ENCODE measurements at regions of chr7 and their contacts with region 1.

Region 1: GRCh38 chr7:87506246-87507180 is 31.0 kb upstream of the ABCB4 start:
- DNase-seq: peak; percentile 16
- ATAC-seq: no peak; the same call in 1 of the 2 replicates
- H3K4me3 ChIP-seq: no peak overlapping the region
- H3K27ac ChIP-seq: no peak overlapping the region
- H3K4me1 ChIP-seq: 0 out of 2 replicates have a peak, but pooled peaks cover 8% of the 10 kb centered on the region
- H3K27me3 ChIP-seq: no peaks in the 10 kb centered on the region
- CTCF ChIP-seq: peak; percentile 60

Region 2: DNA sequence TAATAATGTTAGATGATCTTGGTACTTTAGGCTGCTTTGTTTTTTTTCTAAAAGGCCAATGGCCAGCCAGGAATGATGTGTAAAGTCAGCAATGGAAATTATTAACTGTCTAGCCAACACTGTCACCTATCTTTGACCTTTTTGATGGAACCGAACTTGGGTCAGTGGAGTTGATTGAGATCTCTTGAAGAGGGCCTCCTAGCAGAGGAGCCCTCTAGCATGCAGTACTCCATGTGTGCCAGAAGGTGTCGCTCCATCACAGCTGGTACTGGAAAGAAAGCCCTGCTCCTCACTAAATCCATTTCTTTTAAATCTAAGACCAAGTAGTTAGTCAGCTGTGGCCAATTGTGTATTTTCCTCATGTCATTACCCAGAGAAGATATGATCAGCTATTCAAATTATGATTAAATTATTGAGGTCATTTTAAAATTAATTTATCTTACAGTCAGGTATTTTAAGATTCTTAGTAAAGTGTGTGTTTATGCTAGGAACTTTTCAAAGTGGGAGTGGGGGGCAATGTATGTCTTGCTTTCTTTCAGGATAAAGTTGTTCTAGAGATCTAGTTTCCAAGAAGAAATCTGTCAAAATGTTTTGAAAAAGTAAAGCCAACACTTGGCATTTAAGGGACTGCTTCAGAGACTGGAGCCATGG is 194.2 kb before region 1 on chr7:
- CTCF ChIA-PET with region 1: interaction called, 3 read pairs
- POLR2A ChIA-PET with region 1: no interaction called
- intact Hi-C with region 1: loop called (anchors 1 kb)
- DNase-seq: peak; percentile 75
- ATAC-seq: peak; percentile 56
- H3K4me3 ChIP-seq: no peak overlapping the region
- H3K27ac ChIP-seq: no peak overlapping the region
- H3K4me1 ChIP-seq: peaks cover 13% of the 10 kb centered on the region
- H3K27me3 ChIP-seq: 0 out of 2 replicates have a peak, but pooled peaks cover 3% of the 10 kb centered on the region
- CTCF ChIP-seq: peak; percentile 98

Region 3: GRCh38 chr7:87369216-87369615 is 137.3 kb before region 1 on chr7:
- CTCF ChIA-PET with region 1: no interaction called
- POLR2A ChIA-PET with region 1: no interaction called
- intact Hi-C with region 1: no loop called
- DNase-seq: no peak
- ATAC-seq: no peak
- H3K4me3 ChIP-seq: no peak overlapping the region
- H3K27ac ChIP-seq: no peak overlapping the region
- H3K4me1 ChIP-seq: peaks cover 6% of the 10 kb centered on the region
- H3K27me3 ChIP-seq: no peaks in the 10 kb centered on the region
- CTCF ChIP-seq: no peak

Region 4: DNA sequence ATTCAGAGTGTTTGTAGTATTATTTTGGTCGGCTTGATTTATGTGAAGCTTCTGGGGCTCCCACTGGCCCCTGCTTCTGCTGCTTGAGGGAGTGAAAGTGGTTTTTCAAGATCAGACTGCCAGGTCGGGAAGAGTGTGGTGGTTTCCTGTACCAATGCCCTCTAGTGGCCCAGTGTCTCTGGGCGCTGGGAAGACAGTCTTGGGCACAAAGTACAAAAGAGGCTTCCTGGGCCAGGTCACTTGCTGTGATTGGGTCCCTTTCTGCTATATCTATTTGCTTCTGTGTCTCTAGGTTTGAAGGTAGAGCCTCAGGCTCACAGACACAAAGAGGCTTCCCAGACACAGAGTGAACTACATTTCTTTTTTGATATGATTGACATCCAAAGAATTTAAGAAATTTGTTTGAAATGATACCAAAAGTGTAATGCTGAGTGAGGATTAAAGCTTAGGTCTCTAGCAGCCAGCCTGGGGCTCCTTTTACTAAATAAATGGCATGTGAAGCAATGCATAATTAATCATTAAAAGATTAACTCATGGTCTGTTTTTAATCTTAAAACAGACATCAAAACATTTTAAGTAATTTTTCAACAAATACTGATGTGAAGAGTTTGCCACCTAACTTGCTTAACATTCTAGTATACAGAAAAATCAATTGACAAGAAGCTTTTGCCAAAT is 57.9 kb after region 1 on chr7:
- CTCF ChIA-PET with region 1: interaction called, 3 read pairs
- POLR2A ChIA-PET with region 1: no interaction called
- intact Hi-C with region 1: loop called (anchors 1 kb)
- DNase-seq: peak; percentile 55
- ATAC-seq: peak; percentile 85
- H3K4me3 ChIP-seq: no peak overlapping the region
- H3K27ac ChIP-seq: no peak overlapping the region
- H3K4me1 ChIP-seq: no peaks in the 10 kb centered on the region
- H3K27me3 ChIP-seq: peaks cover 5% of the 10 kb centered on the region; the same call in 1 of the 2 replicates
- CTCF ChIP-seq: peak; percentile 69

Region 5: DNA sequence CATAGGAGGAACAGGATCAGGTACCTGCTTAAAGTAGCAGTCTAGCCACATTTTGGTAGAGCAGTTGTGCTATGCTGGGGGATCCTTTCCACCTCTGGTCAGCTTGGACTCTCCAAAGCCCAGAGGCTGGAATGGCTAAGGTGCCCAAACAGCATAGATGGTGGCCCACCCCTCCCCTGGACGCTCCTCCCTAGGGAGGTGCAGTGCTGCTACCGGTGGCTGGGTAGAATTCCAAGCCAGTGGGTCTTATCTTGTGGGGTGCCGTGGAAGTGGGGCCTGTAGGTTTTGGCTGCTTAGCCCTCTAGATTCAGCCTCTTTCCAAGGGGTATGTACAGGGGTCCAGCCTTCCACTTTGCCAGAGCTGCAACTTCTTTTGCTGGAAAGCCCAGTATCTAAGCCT is 165.7 kb after region 1 on chr7:
- CTCF ChIA-PET with region 1: no interaction called
- POLR2A ChIA-PET with region 1: no interaction called
- intact Hi-C with region 1: no loop called
- DNase-seq: no peak
- ATAC-seq: no peak
- H3K4me3 ChIP-seq: no peak overlapping the region
- H3K27ac ChIP-seq: no peak overlapping the region
- H3K4me1 ChIP-seq: no peaks in the 10 kb centered on the region
- H3K27me3 ChIP-seq: no peaks in the 10 kb centered on the region
- CTCF ChIP-seq: no peak

Region 6: GRCh38 chr7:87886875-87887274 is 380.4 kb after region 1 on chr7:
- CTCF ChIA-PET with region 1: no interaction called
- POLR2A ChIA-PET with region 1: no interaction called
- intact Hi-C with region 1: loop called (anchors 2 kb)
- DNase-seq: peak; percentile 68
- ATAC-seq: no peak
- H3K4me3 ChIP-seq: no peak overlapping the region
- H3K27ac ChIP-seq: no peak overlapping the region
- H3K4me1 ChIP-seq: no peaks in the 10 kb centered on the region
- H3K27me3 ChIP-seq: no peaks in the 10 kb centered on the region
- CTCF ChIP-seq: peak; percentile 64

Region 7: GRCh38 chr7:88169717-88170320 is 663.3 kb after region 1 on chr7:
- CTCF ChIA-PET with region 1: interaction called, 7 read pairs
- POLR2A ChIA-PET with region 1: no interaction called
- intact Hi-C with region 1: loop called (anchors 10 kb)
- DNase-seq: peak; percentile 55
- ATAC-seq: peak; percentile 51; the same call in 1 of the 2 replicates
- H3K4me3 ChIP-seq: no peak overlapping the region
- H3K27ac ChIP-seq: no peak overlapping the region
- H3K4me1 ChIP-seq: no peaks in the 10 kb centered on the region
- H3K27me3 ChIP-seq: no peaks in the 10 kb centered on the region
- CTCF ChIP-seq: peak; percentile 68